ENCODE measurements at regions of chr9 and their contacts with region 1.

Region 1: GRCh38 chr9:129802851-129803675 is at the start of gene TOR1B:
- DNase-seq: peak; percentile 95
- ATAC-seq: peak; percentile 92
- H3K4me3 Mint-ChIP-seq: peak within 1 kb of the TSS; percentile 81
- H3K27ac Mint-ChIP-seq: peak within 1 kb of the TSS; percentile 90
- H3K4me1 Mint-ChIP-seq: peaks cover 25% of the 10 kb centered on the region
- H3K27me3 Mint-ChIP-seq: no peaks in the 10 kb centered on the region
- total RNA-seq, gene TOR1B: 18.0 to 22.1 TPM

Region 2: DNA sequence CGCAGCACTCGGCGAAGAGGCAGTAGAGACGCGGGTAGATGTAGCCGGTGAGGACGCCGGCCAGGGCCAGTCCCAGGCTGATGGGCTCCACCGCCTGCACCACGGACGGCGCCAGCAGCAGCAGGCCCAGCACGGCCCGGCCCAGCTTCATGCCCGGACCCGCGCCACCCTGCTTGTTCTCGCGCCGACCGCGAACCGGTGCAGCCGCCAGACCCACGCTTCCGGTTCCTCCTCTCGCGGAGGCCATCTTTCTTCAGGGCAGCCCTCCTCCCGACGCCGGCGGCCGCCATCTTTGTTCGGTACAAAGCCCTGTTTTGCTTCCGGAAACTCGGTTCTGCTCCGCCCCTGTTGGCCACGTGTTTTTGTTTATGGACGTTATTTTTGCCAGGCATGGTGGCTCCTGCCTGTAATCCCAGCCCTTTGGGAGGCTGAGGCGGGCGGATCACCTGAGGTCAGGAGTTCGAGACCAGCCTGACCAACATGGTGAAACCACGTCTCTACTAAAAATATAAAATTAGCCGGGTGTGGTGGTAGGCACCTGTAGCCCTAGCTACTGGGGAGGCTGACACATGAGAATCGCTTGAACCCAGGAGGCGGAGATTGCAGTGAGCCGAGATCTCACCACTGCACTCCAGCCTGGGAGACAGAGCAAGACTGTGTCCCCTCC is 21.0 kb after region 1 on chr9 and contains the start of gene TOR1A:
- CTCF ChIA-PET with region 1: interaction called, 4 read pairs
- POLR2A ChIA-PET with region 1: no interaction called
- intact Hi-C with region 1: loop called (anchors 1 kb)
- DNase-seq: peak; percentile 97
- ATAC-seq: peak; percentile 93
- H3K4me3 Mint-ChIP-seq: peak within 1 kb of the TSS; percentile 82
- H3K27ac Mint-ChIP-seq: peak within 1 kb of the TSS; percentile 63
- H3K4me1 Mint-ChIP-seq: peaks cover 14% of the 10 kb centered on the region
- H3K27me3 Mint-ChIP-seq: no peaks in the 10 kb centered on the region
- total RNA-seq, gene TOR1A: 34.9 to 39.7 TPM

Region 3: DNA sequence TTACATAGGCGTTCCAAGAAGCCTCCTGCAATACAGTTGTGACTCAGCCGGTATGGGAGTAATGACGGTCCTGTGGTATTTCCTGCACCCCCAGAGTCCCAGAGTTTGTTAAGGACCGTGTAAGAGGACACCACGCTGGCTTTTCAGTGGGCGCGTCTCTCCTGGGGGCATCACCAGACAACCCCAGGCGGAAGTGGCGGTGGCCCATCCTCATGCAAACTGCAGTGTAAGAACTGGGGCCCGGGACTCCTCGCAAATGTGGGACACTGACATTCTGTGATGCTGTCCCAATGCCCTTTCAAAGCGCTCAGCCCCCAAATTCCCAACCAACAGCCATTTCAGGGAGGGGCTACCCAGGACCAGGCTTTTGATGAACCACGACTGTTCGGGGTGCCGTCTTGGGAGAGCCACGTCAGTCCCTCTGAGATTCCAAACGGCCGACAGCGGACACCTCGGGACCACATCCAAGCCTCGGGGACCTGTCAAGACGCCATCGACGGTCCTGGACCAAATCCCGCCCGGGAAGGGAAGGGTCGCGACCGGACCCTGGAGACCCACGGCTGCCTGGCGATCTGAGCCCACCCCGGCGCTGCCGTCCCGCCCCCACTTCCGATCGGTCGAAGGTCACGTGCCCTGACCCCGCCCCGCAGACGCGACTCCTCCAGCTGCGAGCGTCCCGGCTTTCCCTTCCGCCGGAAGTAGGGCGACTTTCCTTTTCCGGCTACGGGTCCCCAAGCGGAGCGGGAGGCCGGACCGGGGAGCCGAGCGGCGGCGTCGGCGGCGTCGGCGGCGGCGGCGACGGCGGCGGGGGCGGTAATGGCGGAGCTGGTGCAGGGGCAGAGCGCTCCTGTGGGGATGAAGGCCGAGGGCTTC is 776.0 kb after region 1 on chr9 and contains the start of gene FUBP3:
- CTCF ChIA-PET with region 1: no interaction called
- POLR2A ChIA-PET with region 1: no interaction called
- intact Hi-C with region 1: loop called in 1 of 2 experiments (anchors 1 kb)
- DNase-seq: peak; percentile 96
- ATAC-seq: peak; percentile 94
- H3K4me3 Mint-ChIP-seq: peak within 1 kb of the TSS; percentile 90
- H3K27ac Mint-ChIP-seq: peak within 1 kb of the TSS; percentile 89
- H3K4me1 Mint-ChIP-seq: peaks cover 32% of the 10 kb centered on the region
- H3K27me3 Mint-ChIP-seq: no peaks in the 10 kb centered on the region
- total RNA-seq, gene FUBP3: 36.4 to 38.5 TPM

Measured in activated CD4-positive, alpha-beta T cell treated with anti-CD3 and anti-CD28 coated beads for 36 hours (primary cell).